ENCODE measurements at regions of chr6 and their contacts with region 1.

Region 1: GRCh38 chr6:30730601-30731435 is 10.7 kb downstream of the TUBB start:
- DNase-seq: peak; percentile 90
- H3K4me3 Mint-ChIP-seq: peak overlapping the region; percentile 6
- H3K27ac Mint-ChIP-seq: peak overlapping the region; percentile 22
- H3K4me1 Mint-ChIP-seq: peaks cover 61% of the 10 kb centered on the region
- H3K27me3 Mint-ChIP-seq: no peaks in the 10 kb centered on the region

Region 2: DNA sequence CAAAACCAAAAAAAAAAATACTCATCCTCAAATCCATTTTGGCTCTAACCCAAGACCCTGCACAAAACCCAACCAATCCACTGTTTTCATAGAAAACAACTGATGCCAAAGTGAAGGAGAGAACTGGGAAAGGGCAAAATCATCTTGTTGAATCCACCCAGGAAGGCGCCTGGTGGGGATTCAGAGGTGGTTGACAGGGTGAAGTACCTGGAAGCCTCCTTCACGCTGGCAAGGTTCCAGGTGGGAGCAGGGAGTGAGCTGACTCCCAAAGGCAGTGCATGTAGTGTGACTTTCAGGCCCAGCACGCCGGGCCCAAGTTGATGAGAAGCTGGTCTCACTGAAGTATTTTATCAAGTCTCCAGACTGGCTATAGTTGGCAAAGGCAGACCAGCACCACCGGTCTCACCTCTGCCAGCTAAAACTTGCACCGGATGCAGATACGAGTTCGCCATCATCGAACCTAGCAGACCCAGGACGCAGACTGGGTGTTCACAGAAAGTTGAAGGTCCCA is 130.3 kb before region 1 on chr6:
- CTCF ChIA-PET with region 1: interaction called, 10 read pairs
- POLR2A ChIA-PET with region 1: no interaction called
- DNase-seq: no peak
- H3K4me3 Mint-ChIP-seq: no peak overlapping the region
- H3K27ac Mint-ChIP-seq: peak overlapping the region; percentile 11
- H3K4me1 Mint-ChIP-seq: peaks cover 18% of the 10 kb centered on the region
- H3K27me3 Mint-ChIP-seq: no peaks in the 10 kb centered on the region

Region 3: DNA sequence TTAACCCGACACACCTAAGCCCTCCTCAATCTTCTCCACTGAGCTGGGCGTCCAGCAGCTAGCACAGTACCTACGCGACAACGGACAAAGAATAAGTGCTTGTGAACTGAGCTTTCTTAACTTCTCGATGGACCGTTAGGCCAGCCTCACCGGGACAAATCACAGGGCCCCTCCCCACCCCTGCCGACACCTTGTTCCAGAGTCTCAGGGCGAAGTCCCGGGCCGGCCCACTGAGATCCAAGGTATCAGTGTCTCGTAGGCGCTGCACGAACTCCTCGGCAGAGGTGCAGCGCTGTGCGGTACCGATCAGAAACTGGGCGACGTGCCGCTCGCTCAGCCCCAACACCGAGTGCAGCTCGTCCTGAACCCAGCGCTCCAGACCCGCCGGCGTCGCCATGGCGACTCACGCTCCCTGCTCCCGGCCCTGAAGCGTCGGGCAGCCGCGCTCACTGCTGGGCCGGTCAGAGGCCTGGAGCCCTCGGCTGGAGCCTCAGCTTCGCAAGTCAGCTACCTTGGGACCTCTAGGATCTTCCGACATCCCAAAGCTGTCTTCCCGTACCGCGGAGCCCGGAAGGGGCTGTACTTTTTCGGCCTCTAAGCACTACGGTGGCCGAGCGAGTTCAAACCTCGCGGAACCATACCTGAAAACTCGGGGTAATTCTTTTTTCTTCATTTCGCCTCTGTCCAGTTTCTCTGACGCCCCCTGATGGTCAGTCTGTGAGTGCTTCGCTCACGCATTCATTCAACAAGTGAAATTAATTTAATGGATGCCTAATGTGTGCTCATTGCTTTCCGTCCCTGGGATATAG is 58.2 kb before region 1 on chr6 and contains the start of gene DHX16:
- CTCF ChIA-PET with region 1: interaction called, 476 read pairs
- POLR2A ChIA-PET with region 1: interaction called, 3 read pairs
- DNase-seq: peak; percentile 96
- H3K4me3 Mint-ChIP-seq: peak within 1 kb of the TSS; percentile 91
- H3K27ac Mint-ChIP-seq: peak within 1 kb of the TSS; percentile 84
- H3K4me1 Mint-ChIP-seq: peaks cover 45% of the 10 kb centered on the region
- H3K27me3 Mint-ChIP-seq: no peaks in the 10 kb centered on the region
- total RNA-seq, gene DHX16: 40.4 to 40.7 TPM

Region 4: GRCh38 chr6:30717042-30717844 is 13.6 kb before region 1 on chr6 and contains the start of gene MDC1:
- CTCF ChIA-PET with region 1: interaction called, 42 read pairs
- POLR2A ChIA-PET with region 1: no interaction called
- DNase-seq: peak; percentile 100
- H3K4me3 Mint-ChIP-seq: peak within 1 kb of the TSS; percentile 97
- H3K27ac Mint-ChIP-seq: peak within 1 kb of the TSS; percentile 98
- H3K4me1 Mint-ChIP-seq: peaks cover 58% of the 10 kb centered on the region
- H3K27me3 Mint-ChIP-seq: no peaks in the 10 kb centered on the region
- total RNA-seq, gene MDC1: 46.8 to 53.2 TPM

Region 5: DNA sequence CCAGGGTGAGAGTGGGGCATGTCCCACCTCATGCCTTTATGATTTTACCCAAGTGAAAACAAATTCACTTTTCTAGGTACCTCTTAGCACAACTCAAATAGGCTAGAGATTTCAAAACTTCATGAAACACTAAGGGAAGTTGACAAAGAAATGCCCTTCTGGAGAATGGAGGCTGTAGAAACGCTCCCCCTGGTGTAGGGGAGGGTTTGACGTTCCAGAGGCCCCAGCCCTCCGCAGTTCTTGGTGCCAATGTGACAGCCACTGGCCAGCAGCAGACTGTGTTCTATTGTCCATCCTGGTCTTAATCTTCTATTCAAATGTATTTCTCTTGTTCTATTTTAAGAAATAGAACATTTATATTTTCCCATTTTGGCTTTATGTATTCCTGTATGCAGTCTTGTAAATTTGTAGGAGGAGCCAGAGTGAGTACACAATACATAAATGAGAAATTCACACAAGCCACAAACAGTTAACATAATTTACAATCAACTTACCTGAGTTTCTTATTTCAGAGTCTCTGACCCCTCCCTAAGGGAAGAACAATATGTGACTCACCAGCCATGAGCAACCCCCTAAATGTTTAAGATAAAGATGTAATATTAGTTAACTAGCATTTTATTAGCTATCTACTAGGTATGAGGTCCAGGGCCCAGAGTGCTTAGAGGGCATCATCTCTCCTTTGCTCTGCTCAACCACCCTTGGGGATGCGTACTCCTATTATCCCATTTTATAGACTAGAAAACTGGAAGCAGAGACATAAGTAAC is 243.9 kb after region 1 on chr6:
- CTCF ChIA-PET with region 1: no interaction called
- POLR2A ChIA-PET with region 1: no interaction called
- DNase-seq: no peak
- H3K4me3 Mint-ChIP-seq: no peak overlapping the region
- H3K27ac Mint-ChIP-seq: no peak overlapping the region
- H3K4me1 Mint-ChIP-seq: no peaks in the 10 kb centered on the region
- H3K27me3 Mint-ChIP-seq: peaks cover 19% of the 10 kb centered on the region